ENCODE measurements at regions of chr10 and their contacts with region 1.

Region 1: GRCh38 chr10:66162560-66163143 is 763.2 kb upstream of the LRRTM3 start:
- DNase-seq: no peak
- H3K27ac ChIP-seq: no peak overlapping the region
- CTCF ChIP-seq: no peak

Region 2: DNA sequence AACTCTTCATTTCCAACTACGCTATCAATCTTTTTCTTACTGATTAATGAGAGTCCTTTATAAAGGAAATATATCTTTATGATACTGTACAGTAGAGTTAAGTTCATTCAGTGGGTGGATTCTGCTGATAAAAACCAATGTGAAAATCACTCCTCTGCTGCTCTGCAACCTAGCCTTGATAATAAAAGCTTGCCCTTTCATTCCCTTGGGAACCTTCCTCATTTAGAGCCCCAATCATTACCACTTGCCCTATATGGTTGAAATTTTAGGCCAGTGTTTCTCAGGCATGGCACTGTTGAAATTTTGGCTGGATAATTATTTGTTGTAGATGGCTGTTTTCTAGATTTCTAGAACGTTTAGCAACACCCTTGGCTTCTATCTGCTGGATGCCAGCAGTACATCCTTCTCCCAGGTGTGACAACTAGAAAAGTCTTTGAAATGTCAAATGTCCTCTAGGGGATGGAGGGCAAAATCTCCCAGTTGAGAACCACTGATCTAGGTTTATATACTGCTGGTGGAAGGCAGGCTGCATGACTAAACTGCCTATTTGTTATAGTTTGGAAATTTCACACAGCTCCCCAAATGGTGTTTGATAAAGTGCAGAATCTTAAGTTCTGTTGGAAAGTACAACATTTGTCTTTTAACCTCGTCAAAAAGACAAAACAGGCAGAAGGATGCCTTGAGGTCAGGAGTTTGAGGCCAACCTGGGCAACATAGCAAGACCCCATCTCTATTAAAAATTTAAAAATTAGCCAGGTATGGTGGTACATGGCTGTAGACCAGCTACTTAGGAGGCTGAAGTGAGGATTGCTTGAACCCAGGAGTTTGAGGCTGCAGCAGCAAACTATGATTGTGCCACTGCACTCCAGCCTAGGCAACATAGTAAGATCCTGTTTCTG is 1712.9 kb after region 1 on chr10:
- CTCF ChIA-PET with region 1: interaction called, 11 read pairs
- POLR2A ChIA-PET with region 1: no interaction called
- DNase-seq: no peak
- H3K27ac ChIP-seq: no peak overlapping the region
- CTCF ChIP-seq: no peak

Measured in RWPE1 (cell line).